ENCODE measurements at regions of chr16 and their contacts with region 1.

Region 1: GRCh38 chr16:70679666-70680494 is 6.0 kb downstream of the MTSS2 start:
- DNase-seq: peak in 4 of 5 donors; percentile 59 to 68 (median 62)
- H3K4me3 ChIP-seq: no peak overlapping the region
- H3K27ac ChIP-seq: peak overlapping the region in 1 of 2 donors; percentile 43
- H3K4me1 ChIP-seq: peaks cover 33% of the 10 kb centered on the region
- H3K27me3 ChIP-seq: no peaks in the 10 kb centered on the region
- CTCF ChIP-seq: peak; percentile 21 to 86 (median 83)
- EP300 ChIP-seq: no peak
- POLR2A ChIP-seq: no peak

Region 2: DNA sequence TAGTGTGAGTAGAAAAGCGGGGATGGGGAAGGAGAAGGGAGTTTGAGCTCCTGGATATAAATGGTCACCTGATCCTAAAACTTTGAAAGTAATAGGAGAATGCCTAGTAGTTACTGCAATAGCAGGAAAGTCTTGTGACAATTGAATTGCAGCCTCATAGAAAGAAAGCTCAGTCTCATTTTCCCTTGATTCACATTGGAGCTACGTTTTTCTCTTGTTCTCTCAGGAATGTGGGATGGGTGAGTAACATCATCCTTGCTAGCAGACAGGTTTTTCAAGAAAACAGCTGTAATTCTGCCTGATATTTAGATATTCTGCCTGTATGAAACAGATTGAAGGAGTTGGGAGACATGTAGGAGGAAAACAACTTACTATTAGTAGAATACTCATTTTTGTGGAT is 130.9 kb before region 1 on chr16:
- intact Hi-C with region 1: no loop called
- DNase-seq: no peak
- H3K4me3 ChIP-seq: no peak overlapping the region
- H3K27ac ChIP-seq: no peak overlapping the region
- H3K4me1 ChIP-seq: no peaks in the 10 kb centered on the region
- H3K27me3 ChIP-seq: no peaks in the 10 kb centered on the region
- CTCF ChIP-seq: no peak
- EP300 ChIP-seq: no peak
- POLR2A ChIP-seq: no peak

Region 3: GRCh38 chr16:70703041-70703834 is 23.4 kb after region 1 on chr16:
- intact Hi-C with region 1: no loop called
- DNase-seq: peak in 3 of 5 donors; percentile 67 to 70 (median 67)
- H3K4me3 ChIP-seq: no peak overlapping the region
- H3K27ac ChIP-seq: peak overlapping the region; percentile 3 to 66
- H3K4me1 ChIP-seq: peaks cover 25% of the 10 kb centered on the region
- H3K27me3 ChIP-seq: no peaks in the 10 kb centered on the region
- CTCF ChIP-seq: peak in 2 of 3 donors; percentile 28 to 41
- EP300 ChIP-seq: no peak
- POLR2A ChIP-seq: peak; percentile 1

Region 4: DNA sequence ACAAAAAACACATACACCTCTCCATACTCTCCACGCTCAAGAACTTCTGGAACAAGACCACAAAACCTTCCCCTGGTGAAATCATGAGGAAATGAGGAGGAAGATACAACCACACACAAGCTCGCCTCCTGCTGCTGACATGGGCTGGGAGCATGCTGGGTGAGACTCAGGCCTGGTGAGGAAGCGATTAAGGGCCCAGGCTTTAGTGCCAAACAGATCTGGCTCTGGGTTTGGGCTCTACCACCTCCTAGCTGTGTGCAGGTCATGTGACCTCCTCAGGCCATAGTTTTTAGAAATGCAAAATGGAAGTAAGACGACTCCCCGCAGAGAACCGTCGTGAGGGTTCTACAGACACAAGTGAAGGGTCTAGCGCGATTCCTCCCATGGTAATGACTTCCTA is 79.8 kb after region 1 on chr16:
- intact Hi-C with region 1: loop called in 1 of 4 experiments (anchors 5 kb)
- DNase-seq: no peak
- H3K4me3 ChIP-seq: no peak overlapping the region
- H3K27ac ChIP-seq: no peak overlapping the region
- H3K4me1 ChIP-seq: no peaks in the 10 kb centered on the region
- H3K27me3 ChIP-seq: no peaks in the 10 kb centered on the region
- CTCF ChIP-seq: no peak
- EP300 ChIP-seq: no peak
- POLR2A ChIP-seq: no peak

Region 5: GRCh38 chr16:70770626-70771552 is 91.0 kb after region 1 on chr16:
- intact Hi-C with region 1: loop called in 3 of 4 experiments (anchors 1 to 2 kb)
- DNase-seq: peak; percentile 50 to 83 (median 75)
- H3K4me3 ChIP-seq: no peak overlapping the region
- H3K27ac ChIP-seq: no peak overlapping the region
- H3K4me1 ChIP-seq: no peaks in the 10 kb centered on the region
- H3K27me3 ChIP-seq: no peaks in the 10 kb centered on the region
- CTCF ChIP-seq: peak; percentile 78 to 92 (median 89)
- EP300 ChIP-seq: no peak
- POLR2A ChIP-seq: peak; percentile 23

Measured in ovary (tissue), 10 donors.